ENCODE measurements at regions of chr3 and their contacts with region 1.

Region 1: DNA sequence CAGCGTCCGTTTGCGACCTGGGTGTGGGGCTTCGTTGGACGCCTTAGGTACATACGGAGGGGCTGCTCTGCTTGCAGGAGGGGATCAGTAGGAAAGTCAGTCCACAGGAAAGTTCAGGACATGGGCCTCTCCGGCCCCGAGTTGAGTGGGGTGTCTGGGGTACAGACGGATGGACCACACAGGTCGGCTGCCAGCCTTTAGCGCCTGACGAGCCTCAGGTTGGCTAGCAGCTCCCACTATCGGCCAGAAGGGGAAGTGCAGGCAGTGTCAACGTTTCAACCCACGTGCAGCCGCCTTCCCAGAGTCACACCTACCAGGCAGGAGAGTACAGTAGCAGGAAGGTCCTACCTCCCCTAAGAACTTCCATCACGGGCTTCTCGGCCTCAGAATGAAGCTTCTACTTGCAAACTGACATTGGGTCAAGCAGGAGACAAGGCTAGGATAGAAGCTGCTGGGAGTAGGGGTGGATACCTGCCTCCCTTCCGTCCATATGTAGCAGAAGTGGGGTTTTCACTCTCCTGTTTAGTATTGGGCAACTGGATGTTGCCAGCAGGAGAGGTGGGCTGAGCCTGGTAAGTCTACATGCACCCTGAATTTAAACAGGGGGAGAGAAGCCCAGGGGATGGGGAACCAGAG is 1.8 kb upstream of the SCN5A start:
- DNase-seq: peak; percentile 60
- ATAC-seq: peak; percentile 62
- H3K4me3 ChIP-seq: no peak overlapping the region
- H3K27ac ChIP-seq: no peak overlapping the region
- H3K4me1 ChIP-seq: peaks cover 11 to 31% of the 10 kb centered on the region in 2 experiments
- H3K27me3 ChIP-seq: no peaks in the 10 kb centered on the region
- CTCF ChIP-seq: peak; percentile 80 to 98 (median 85)
- POLR2A ChIP-seq: no peak
- RAD21 ChIP-seq: peak; percentile 80

Region 2: GRCh38 chr3:38496131-38496910 is 155.0 kb before region 1 on chr3 and contains the start of gene EXOG:
- CTCF ChIA-PET with region 1: interaction called, 8 read pairs
- POLR2A ChIA-PET with region 1: no interaction called
- RAD21 ChIA-PET with region 1: no interaction called
- intact Hi-C with region 1: loop called (anchors 2 kb)
- DNase-seq: peak; percentile 78
- ATAC-seq: peak; percentile 96
- H3K4me3 ChIP-seq: peak within 1 kb of the TSS; percentile 77 to 88
- H3K27ac ChIP-seq: peak within 1 kb of the TSS; percentile 76
- H3K4me1 ChIP-seq: peaks cover 4 to 7% of the 10 kb centered on the region in 2 experiments; a peak in 3 of 4 replicates
- H3K27me3 ChIP-seq: no peaks in the 10 kb centered on the region
- CTCF ChIP-seq: peak; percentile 87 to 88 (median 88)
- POLR2A ChIP-seq: peak; percentile 49
- RAD21 ChIP-seq: peak; percentile 77
- total RNA-seq, gene EXOG: 8.3 TPM